ENCODE measurements at regions of chr6 and their contacts with region 1.

Region 1: DNA sequence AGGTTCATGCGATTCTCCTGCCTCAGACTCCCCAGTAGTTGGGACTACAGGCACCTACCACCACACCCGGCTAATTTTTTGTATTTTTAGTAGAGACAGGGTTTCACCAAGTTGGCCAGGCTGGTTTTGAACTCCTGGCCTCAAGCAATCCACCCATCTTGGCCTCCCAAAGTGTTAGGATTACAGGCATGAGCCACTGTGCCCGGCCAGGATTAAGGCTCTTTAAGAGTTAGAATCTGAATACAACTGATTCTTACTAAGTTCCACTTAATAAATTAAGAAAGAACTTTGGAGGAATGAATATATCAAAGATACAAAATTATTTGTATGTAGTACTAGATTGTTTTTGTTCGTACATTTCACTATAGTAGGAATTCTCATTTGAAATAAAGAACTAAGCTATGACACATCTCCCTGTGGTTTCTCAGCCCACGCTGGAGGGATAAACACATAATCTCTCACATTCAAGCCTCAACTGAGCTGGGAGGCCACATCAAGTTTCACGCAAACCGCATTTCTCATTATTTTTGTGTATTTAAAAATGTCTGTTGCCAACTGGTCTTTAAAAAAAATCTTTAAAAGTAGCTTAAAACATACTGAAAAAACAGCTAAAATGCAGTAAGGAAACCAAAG is 34.2 kb downstream of the DTNBP1 start:
- DNase-seq: peak; percentile 56 to 61
- ATAC-seq: peak; percentile 82 to 98 (median 86)
- H3K4me3 ChIP-seq: no peak overlapping the region
- H3K4me3 Mint-ChIP-seq: peak overlapping the region; percentile 78
- H3K27ac ChIP-seq: peak overlapping the region; percentile 71
- H3K27ac Mint-ChIP-seq: peak overlapping the region; percentile 62 to 89
- H3K4me1 ChIP-seq: peaks cover 11% of the 10 kb centered on the region
- H3K4me1 Mint-ChIP-seq: peaks cover 33 to 67% of the 10 kb centered on the region in 2 donors
- H3K27me3 ChIP-seq: no peaks in the 10 kb centered on the region
- H3K27me3 Mint-ChIP-seq: no peaks in the 10 kb centered on the region
- CTCF ChIP-seq: no peak

Region 2: GRCh38 chr6:15389765-15390723 is 238.6 kb before region 1 on chr6:
- intact Hi-C with region 1: no loop called
- DNase-seq: peak in 1 of 2 donors; percentile 55
- ATAC-seq: peak; percentile 22 to 68 (median 53)
- H3K4me3 ChIP-seq: no peak overlapping the region
- H3K4me3 Mint-ChIP-seq: no peak overlapping the region
- H3K27ac ChIP-seq: no peak overlapping the region
- H3K27ac Mint-ChIP-seq: peak overlapping the region; percentile 47 to 62
- H3K4me1 ChIP-seq: peaks cover 35% of the 10 kb centered on the region
- H3K4me1 Mint-ChIP-seq: peaks cover 82 to 90% of the 10 kb centered on the region in 2 donors
- H3K27me3 ChIP-seq: no peaks in the 10 kb centered on the region
- H3K27me3 Mint-ChIP-seq: no peaks in the 10 kb centered on the region
- CTCF ChIP-seq: peak; percentile 58

Region 3: DNA sequence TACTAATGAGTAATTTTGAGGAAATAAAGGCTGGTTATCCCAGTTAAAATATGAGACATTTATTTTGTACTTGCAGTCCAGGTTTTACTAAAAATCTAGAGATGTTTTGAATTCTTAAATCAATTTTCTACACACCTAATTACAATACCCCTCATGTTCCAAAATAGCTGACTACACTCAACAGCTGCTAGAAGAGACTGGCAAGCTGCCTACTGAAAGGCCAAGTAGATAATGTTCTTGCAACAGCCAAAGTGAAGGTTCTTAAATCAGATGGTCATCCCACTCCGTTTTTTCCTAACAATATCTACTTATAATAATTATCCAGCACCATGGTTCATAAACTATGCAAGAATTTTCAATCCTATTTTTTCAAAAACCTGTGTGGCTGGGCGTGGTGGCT is 34.8 kb before region 1 on chr6:
- intact Hi-C with region 1: loop called (anchors 5 kb)
- DNase-seq: no peak
- ATAC-seq: no peak
- H3K4me3 ChIP-seq: no peak overlapping the region
- H3K4me3 Mint-ChIP-seq: no peak overlapping the region
- H3K27ac ChIP-seq: no peak overlapping the region
- H3K27ac Mint-ChIP-seq: no peak overlapping the region
- H3K4me1 ChIP-seq: peaks cover 10% of the 10 kb centered on the region
- H3K4me1 Mint-ChIP-seq: peaks cover 56 to 66% of the 10 kb centered on the region in 2 donors
- H3K27me3 ChIP-seq: no peaks in the 10 kb centered on the region
- H3K27me3 Mint-ChIP-seq: no peaks in the 10 kb centered on the region
- CTCF ChIP-seq: no peak

Region 4: DNA sequence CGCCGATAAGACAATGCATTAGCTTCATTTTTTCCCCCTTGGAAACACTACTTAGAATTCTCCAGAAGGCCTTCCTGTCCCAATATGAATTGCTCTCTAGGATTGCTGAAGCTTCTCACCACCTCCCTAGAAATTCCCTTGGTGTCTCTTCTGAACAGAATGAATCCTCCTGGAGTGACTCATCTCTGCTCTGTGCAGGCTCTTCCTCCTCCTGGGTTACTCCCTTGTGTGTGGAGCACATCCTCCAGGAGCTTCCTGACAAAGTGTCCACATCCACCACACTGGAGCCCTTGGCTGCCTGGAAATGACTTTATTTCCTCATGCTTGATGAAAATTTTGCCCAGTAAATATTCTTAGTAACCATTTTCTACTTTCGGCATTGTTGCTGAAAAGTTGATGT is 20.2 kb before region 1 on chr6:
- intact Hi-C with region 1: no loop called
- DNase-seq: no peak
- ATAC-seq: no peak
- H3K4me3 ChIP-seq: no peak overlapping the region
- H3K4me3 Mint-ChIP-seq: no peak overlapping the region
- H3K27ac ChIP-seq: no peak overlapping the region
- H3K27ac Mint-ChIP-seq: no peak overlapping the region
- H3K4me1 ChIP-seq: no peaks in the 10 kb centered on the region
- H3K4me1 Mint-ChIP-seq: peaks cover 28 to 41% of the 10 kb centered on the region in 2 donors
- H3K27me3 ChIP-seq: no peaks in the 10 kb centered on the region
- H3K27me3 Mint-ChIP-seq: no peaks in the 10 kb centered on the region
- CTCF ChIP-seq: no peak